Activated CD4-positive, alpha-beta T cell treated with anti-CD3 and anti-CD28 coated beads for 36 hours (primary cell): ENCODE measurements at regions of chr22 and their contacts with region 1.

Region 1: GRCh38 chr22:41381329-41382097 is at the start of gene TEF:
- DNase-seq: peak; percentile 98
- ATAC-seq: peak; percentile 94
- H3K4me3 Mint-ChIP-seq: peak within 1 kb of the TSS; percentile 79
- H3K27ac Mint-ChIP-seq: peak within 1 kb of the TSS; percentile 91
- H3K4me1 Mint-ChIP-seq: peaks cover 10% of the 10 kb centered on the region
- H3K27me3 Mint-ChIP-seq: no peaks in the 10 kb centered on the region
- total RNA-seq, gene TEF: 1.7 to 2.2 TPM

Region 2: GRCh38 chr22:40856513-40857308 is 524.8 kb before region 1 on chr22 and contains the starts of genes ST13 and XPNPEP3:
- CTCF ChIA-PET with region 1: no interaction called
- POLR2A ChIA-PET with region 1: no interaction called
- intact Hi-C with region 1: loop called in 1 of 2 experiments (anchors 1 kb)
- DNase-seq: peak; percentile 98
- ATAC-seq: peak; percentile 96
- H3K4me3 Mint-ChIP-seq: peak within 1 kb of the TSS; percentile 97
- H3K27ac Mint-ChIP-seq: peak within 1 kb of the TSS; percentile 99
- H3K4me1 Mint-ChIP-seq: peaks cover 53% of the 10 kb centered on the region
- H3K27me3 Mint-ChIP-seq: no peaks in the 10 kb centered on the region
- total RNA-seq, gene ST13: 260 to 297 TPM
- total RNA-seq, gene XPNPEP3: 21.5 to 25.8 TPM

Region 3: GRCh38 chr22:41204992-41205900 is 176.3 kb before region 1 on chr22 and contains the start of gene L3MBTL2:
- CTCF ChIA-PET with region 1: no interaction called
- POLR2A ChIA-PET with region 1: no interaction called
- intact Hi-C with region 1: loop called in 1 of 2 experiments (anchors 1 kb)
- DNase-seq: peak; percentile 100
- ATAC-seq: peak; percentile 100
- H3K4me3 Mint-ChIP-seq: peak within 1 kb of the TSS; percentile 86
- H3K27ac Mint-ChIP-seq: peak within 1 kb of the TSS; percentile 89
- H3K4me1 Mint-ChIP-seq: peaks cover 20% of the 10 kb centered on the region
- H3K27me3 Mint-ChIP-seq: peaks cover 10% of the 10 kb centered on the region
- total RNA-seq, gene L3MBTL2: 24.4 to 25.1 TPM

Region 4: GRCh38 chr22:41226723-41227655 is 154.5 kb before region 1 on chr22:
- CTCF ChIA-PET with region 1: no interaction called
- POLR2A ChIA-PET with region 1: no interaction called
- intact Hi-C with region 1: no loop called
- DNase-seq: no peak
- ATAC-seq: no peak
- H3K4me3 Mint-ChIP-seq: no peak overlapping the region
- H3K27ac Mint-ChIP-seq: no peak overlapping the region
- H3K4me1 Mint-ChIP-seq: no peaks in the 10 kb centered on the region
- H3K27me3 Mint-ChIP-seq: no peaks in the 10 kb centered on the region

Region 5: GRCh38 chr22:41367039-41367679 is 14.4 kb before region 1 on chr22:
- CTCF ChIA-PET with region 1: interaction called, 3 read pairs
- POLR2A ChIA-PET with region 1: interaction called, 13 read pairs
- intact Hi-C with region 1: no loop called
- DNase-seq: peak; percentile 42
- ATAC-seq: peak; percentile 63
- H3K4me3 Mint-ChIP-seq: no peak overlapping the region
- H3K27ac Mint-ChIP-seq: no peak overlapping the region
- H3K4me1 Mint-ChIP-seq: no peaks in the 10 kb centered on the region
- H3K27me3 Mint-ChIP-seq: no peaks in the 10 kb centered on the region

Region 6: GRCh38 chr22:41468381-41469217 is 87.1 kb after region 1 on chr22 and contains the starts of genes ACO2 and PHF5A:
- CTCF ChIA-PET with region 1: no interaction called
- POLR2A ChIA-PET with region 1: interaction called, 17 read pairs
- intact Hi-C with region 1: loop called (anchors 1 kb)
- DNase-seq: peak; percentile 98
- ATAC-seq: peak; percentile 94
- H3K4me3 Mint-ChIP-seq: peak within 1 kb of the TSS; percentile 90
- H3K27ac Mint-ChIP-seq: peak within 1 kb of the TSS; percentile 99
- H3K4me1 Mint-ChIP-seq: peaks cover 47% of the 10 kb centered on the region
- H3K27me3 Mint-ChIP-seq: no peaks in the 10 kb centered on the region
- total RNA-seq, gene ACO2: 95.4 to 106 TPM
- total RNA-seq, gene PHF5A: 54.5 to 61.1 TPM

Region 7: GRCh38 chr22:41621099-41621910 is 239.8 kb after region 1 on chr22 and contains the start of gene XRCC6:
- CTCF ChIA-PET with region 1: no interaction called
- POLR2A ChIA-PET with region 1: interaction called, 4 read pairs
- intact Hi-C with region 1: loop called (anchors 1 to 5 kb)
- DNase-seq: peak; percentile 100
- ATAC-seq: peak; percentile 91
- H3K4me3 Mint-ChIP-seq: peak within 1 kb of the TSS; percentile 98
- H3K27ac Mint-ChIP-seq: peak within 1 kb of the TSS; percentile 99
- H3K4me1 Mint-ChIP-seq: peaks cover 48% of the 10 kb centered on the region
- H3K27me3 Mint-ChIP-seq: no peaks in the 10 kb centered on the region
- total RNA-seq, gene XRCC6: 427 to 469 TPM